ENCODE measurements at regions of chr10 and their contacts with region 1.

Region 1: GRCh38 chr10:74898201-74898976 is 72.0 kb downstream of the KAT6B start:
- DNase-seq: no peak
- ATAC-seq: no peak
- H3K4me3 Mint-ChIP-seq: peak overlapping the region; percentile 19
- H3K27ac Mint-ChIP-seq: no peak overlapping the region
- H3K4me1 Mint-ChIP-seq: peaks cover 60% of the 10 kb centered on the region
- H3K27me3 Mint-ChIP-seq: no peaks in the 10 kb centered on the region
- CTCF ChIP-seq: no peak

Region 2: GRCh38 chr10:74753442-74754211 is 144.8 kb before region 1 on chr10:
- CTCF ChIA-PET with region 1: no interaction called
- POLR2A ChIA-PET with region 1: no interaction called
- intact Hi-C with region 1: no loop called
- DNase-seq: no peak
- ATAC-seq: no peak
- H3K4me3 Mint-ChIP-seq: no peak overlapping the region
- H3K27ac Mint-ChIP-seq: no peak overlapping the region
- H3K4me1 Mint-ChIP-seq: peaks cover 9% of the 10 kb centered on the region
- H3K27me3 Mint-ChIP-seq: no peaks in the 10 kb centered on the region
- CTCF ChIP-seq: no peak

Region 3: DNA sequence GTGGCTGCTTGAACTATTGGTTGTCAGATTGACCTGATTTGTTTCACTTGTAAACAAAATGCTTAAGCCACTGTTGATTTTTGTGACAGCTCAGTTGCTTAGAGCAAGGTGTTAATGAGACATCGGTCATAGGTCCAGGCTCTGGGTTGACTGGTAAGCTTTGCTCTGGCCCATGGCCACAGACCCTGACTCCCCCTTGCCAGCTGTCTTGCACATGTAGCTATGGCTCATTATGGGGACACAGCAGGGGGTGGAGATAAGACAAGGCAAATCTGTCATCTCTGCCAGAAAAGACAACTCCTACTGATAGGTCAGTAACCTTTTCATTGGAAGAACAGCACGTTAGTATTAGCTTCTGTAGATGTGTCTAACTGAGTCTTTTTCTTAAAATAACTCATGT is 23.4 kb after region 1 on chr10:
- CTCF ChIA-PET with region 1: no interaction called
- POLR2A ChIA-PET with region 1: interaction called, 14 read pairs
- intact Hi-C with region 1: no loop called
- DNase-seq: no peak
- ATAC-seq: no peak
- H3K4me3 Mint-ChIP-seq: no peak overlapping the region
- H3K27ac Mint-ChIP-seq: no peak overlapping the region
- H3K4me1 Mint-ChIP-seq: peaks cover 23% of the 10 kb centered on the region
- H3K27me3 Mint-ChIP-seq: no peaks in the 10 kb centered on the region
- CTCF ChIP-seq: no peak